Activated B cell treated with CpG ODN at 0.5 μM for 24 hours (primary cell): ENCODE measurements at regions of chr7 and their contacts with region 1.

Region 1: GRCh38 chr7:77940647-77941046 is 142.1 kb downstream of the PHTF2 start:
- DNase-seq: no peak
- ATAC-seq: peak; percentile 25
- H3K4me3 Mint-ChIP-seq: no peak overlapping the region
- H3K27ac Mint-ChIP-seq: no peak overlapping the region
- H3K4me1 Mint-ChIP-seq: peaks cover 7% of the 10 kb centered on the region
- H3K27me3 Mint-ChIP-seq: no peaks in the 10 kb centered on the region
- CTCF ChIP-seq: no peak

Region 2: DNA sequence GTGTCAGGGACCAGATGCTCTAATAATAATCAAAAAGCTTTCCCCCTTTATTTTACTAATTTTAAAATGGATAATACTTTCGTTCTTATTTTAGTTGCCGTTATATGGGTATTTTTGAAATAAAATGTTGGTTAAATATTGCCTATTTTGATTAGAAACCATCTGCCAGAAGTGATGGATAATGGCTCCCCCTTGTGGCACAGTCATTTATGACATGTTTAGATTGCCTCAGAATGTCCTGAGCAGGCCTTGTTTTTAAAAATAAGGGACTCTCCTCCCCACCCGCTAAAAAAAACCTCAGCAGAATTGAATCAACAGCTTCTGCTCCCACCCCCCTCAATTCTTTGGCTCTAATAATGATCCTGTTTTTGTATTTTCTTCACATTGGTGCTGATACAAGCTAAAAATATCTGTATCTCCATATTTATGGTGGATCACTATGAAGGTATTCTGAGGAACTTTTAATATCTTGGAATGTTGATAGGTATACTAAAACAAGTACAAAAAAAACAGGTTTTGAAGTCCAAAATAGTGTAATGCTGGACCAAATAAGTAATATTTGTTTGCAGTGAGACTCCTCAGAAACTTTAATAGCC is 181.3 kb before region 1 on chr7:
- CTCF ChIA-PET with region 1: interaction called, 4 read pairs
- POLR2A ChIA-PET with region 1: no interaction called
- intact Hi-C with region 1: loop called (anchors 2 kb)
- DNase-seq: no peak
- ATAC-seq: peak; percentile 64
- H3K4me3 Mint-ChIP-seq: no peak overlapping the region
- H3K27ac Mint-ChIP-seq: peak overlapping the region; percentile 50
- H3K4me1 Mint-ChIP-seq: peaks cover 52% of the 10 kb centered on the region
- H3K27me3 Mint-ChIP-seq: no peaks in the 10 kb centered on the region
- CTCF ChIP-seq: peak; percentile 22

Region 3: GRCh38 chr7:77887567-77887966 is 53.1 kb before region 1 on chr7:
- CTCF ChIA-PET with region 1: no interaction called
- POLR2A ChIA-PET with region 1: no interaction called
- intact Hi-C with region 1: no loop called
- DNase-seq: no peak
- ATAC-seq: no peak
- H3K4me3 Mint-ChIP-seq: no peak overlapping the region
- H3K27ac Mint-ChIP-seq: no peak overlapping the region
- H3K4me1 Mint-ChIP-seq: peaks cover 45% of the 10 kb centered on the region
- H3K27me3 Mint-ChIP-seq: no peaks in the 10 kb centered on the region
- CTCF ChIP-seq: no peak

Region 4: GRCh38 chr7:78026492-78026891 is 85.8 kb after region 1 on chr7:
- CTCF ChIA-PET with region 1: no interaction called
- POLR2A ChIA-PET with region 1: no interaction called
- intact Hi-C with region 1: no loop called
- DNase-seq: no peak
- ATAC-seq: no peak
- H3K4me3 Mint-ChIP-seq: no peak overlapping the region
- H3K27ac Mint-ChIP-seq: no peak overlapping the region
- H3K4me1 Mint-ChIP-seq: no peaks in the 10 kb centered on the region
- H3K27me3 Mint-ChIP-seq: peaks cover 5% of the 10 kb centered on the region
- CTCF ChIP-seq: no peak

Region 5: GRCh38 chr7:78039790-78040776 is 99.4 kb after region 1 on chr7:
- CTCF ChIA-PET with region 1: interaction called, 8 read pairs
- POLR2A ChIA-PET with region 1: no interaction called
- intact Hi-C with region 1: loop called (anchors 1 kb)
- DNase-seq: peak; percentile 55
- ATAC-seq: peak; percentile 79
- H3K4me3 Mint-ChIP-seq: no peak overlapping the region
- H3K27ac Mint-ChIP-seq: no peak overlapping the region
- H3K4me1 Mint-ChIP-seq: peaks cover 2% of the 10 kb centered on the region
- H3K27me3 Mint-ChIP-seq: peaks cover 20% of the 10 kb centered on the region
- CTCF ChIP-seq: peak; percentile 18

Region 6: GRCh38 chr7:78125884-78126283 is 185.2 kb after region 1 on chr7:
- CTCF ChIA-PET with region 1: no interaction called
- POLR2A ChIA-PET with region 1: no interaction called
- intact Hi-C with region 1: no loop called
- DNase-seq: no peak
- ATAC-seq: no peak
- H3K4me3 Mint-ChIP-seq: no peak overlapping the region
- H3K27ac Mint-ChIP-seq: no peak overlapping the region
- H3K4me1 Mint-ChIP-seq: no peaks in the 10 kb centered on the region
- H3K27me3 Mint-ChIP-seq: peaks cover 6% of the 10 kb centered on the region
- CTCF ChIP-seq: no peak

Region 7: DNA sequence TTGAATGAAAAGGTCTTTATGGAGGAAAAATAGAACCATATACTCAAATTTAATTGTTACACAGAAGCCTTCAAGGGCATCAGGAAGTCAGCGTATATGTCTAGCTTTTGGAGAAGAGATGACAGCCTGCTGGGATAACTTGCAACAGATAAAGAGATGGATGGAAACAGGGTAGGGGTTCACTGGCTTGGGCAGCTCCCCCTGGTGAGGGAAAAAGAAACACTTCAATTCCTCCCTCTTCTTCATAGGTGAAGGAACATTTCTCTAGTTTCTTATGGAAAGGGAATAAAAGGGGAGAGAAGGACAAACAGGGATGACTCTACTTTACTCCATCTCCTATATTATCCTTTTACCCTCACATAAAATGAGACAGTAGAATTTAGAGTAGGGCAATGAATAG is 493.6 kb after region 1 on chr7:
- CTCF ChIA-PET with region 1: no interaction called
- POLR2A ChIA-PET with region 1: no interaction called
- intact Hi-C with region 1: loop called (anchors 5 kb)
- DNase-seq: no peak
- ATAC-seq: no peak
- H3K4me3 Mint-ChIP-seq: no peak overlapping the region
- H3K27ac Mint-ChIP-seq: no peak overlapping the region
- H3K4me1 Mint-ChIP-seq: no peaks in the 10 kb centered on the region
- H3K27me3 Mint-ChIP-seq: peaks cover 1% of the 10 kb centered on the region
- CTCF ChIP-seq: no peak